HEK293 (cell line): ENCODE measurements at regions of chr14 and their contacts with region 1.

Region 1: GRCh38 chr14:20970983-20971704 is 15.9 kb downstream of the RNASE2 start:
- H3K4me3 ChIP-seq: peak overlapping the region; percentile 70
- H3K27ac ChIP-seq: peak overlapping the region; percentile 45; the same call in 1 of the 2 replicates
- H3K4me1 ChIP-seq: no peaks in the 10 kb centered on the region
- CTCF ChIP-seq: peak; percentile 84

Region 2: DNA sequence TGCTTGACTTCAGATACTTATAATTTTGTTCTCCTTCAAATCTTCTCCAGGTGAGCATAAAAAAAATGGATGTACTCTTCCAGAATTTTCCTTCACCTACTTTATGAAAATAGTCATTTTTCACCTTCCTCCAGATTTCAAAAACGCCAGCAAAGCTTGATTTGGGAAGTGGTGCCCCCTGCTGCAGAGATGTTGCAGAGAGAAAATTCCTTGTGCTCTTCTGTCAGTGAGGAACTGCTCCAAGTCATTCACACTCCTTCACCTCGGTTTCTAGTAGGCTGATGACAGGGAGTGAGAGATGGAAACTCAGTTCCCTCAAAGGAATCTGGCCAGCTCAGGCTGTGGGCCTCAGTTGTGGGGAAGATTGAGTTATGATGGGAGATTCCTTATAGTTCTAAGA is 104.2 kb before region 1 on chr14:
- CTCF ChIA-PET with region 1: interaction called, 21 read pairs
- POLR2A ChIA-PET with region 1: no interaction called
- H3K4me3 ChIP-seq: no peak overlapping the region
- H3K27ac ChIP-seq: no peak overlapping the region
- H3K4me1 ChIP-seq: no peaks in the 10 kb centered on the region
- CTCF ChIP-seq: no peak

Region 3: DNA sequence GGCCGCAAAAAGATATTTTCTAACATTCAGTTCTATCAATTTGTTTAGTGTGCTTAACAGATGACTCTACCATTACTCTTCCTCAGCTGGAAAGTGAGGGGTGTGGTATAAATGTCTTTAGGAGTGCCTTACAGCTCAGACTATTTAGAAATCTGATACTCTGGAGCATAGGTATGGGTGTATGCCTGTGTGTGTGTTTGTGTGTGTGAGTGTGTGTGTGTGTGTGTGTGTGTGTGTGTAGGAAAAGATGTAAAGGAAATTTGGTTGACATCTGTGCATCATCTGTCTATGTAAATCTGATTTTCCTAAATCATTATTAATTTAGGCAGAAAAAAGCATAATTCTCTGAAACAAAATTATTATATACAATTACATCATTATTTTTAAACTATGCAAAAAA is 63.9 kb before region 1 on chr14:
- CTCF ChIA-PET with region 1: no interaction called
- POLR2A ChIA-PET with region 1: no interaction called
- H3K4me3 ChIP-seq: no peak overlapping the region
- H3K27ac ChIP-seq: no peak overlapping the region
- H3K4me1 ChIP-seq: no peaks in the 10 kb centered on the region
- CTCF ChIP-seq: no peak

Region 4: DNA sequence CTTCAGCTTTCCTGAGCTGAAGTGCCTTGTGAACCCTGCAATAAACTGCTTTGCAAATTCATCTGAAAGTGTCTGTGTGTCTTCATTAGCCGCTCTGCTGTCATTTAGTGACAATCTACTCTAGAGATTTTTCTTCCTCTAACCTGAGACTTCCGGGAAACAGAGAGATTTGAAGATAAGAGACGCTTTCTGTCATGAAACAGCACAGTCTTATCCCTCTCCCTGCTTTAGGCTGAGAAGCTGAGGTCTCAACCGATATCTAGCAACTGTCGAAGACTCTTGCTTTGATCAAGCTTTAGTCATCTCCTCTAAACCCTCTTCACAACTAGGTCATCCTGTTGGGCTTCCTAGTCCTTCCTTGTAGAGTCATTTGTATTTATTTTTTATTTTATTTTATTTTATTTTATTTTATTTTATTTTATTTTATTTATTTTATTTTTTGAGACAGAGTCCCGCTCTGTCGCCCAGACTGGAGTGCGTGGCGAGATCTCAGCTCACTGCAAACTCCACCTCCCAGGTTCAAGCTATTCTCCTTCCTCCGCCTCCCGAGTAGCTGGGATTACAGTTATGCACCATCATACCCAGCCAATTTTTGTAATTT is 14.7 kb before region 1 on chr14:
- CTCF ChIA-PET with region 1: interaction called, 46 read pairs
- POLR2A ChIA-PET with region 1: interaction called, 17 read pairs
- H3K4me3 ChIP-seq: no peak overlapping the region
- H3K27ac ChIP-seq: no peak overlapping the region
- H3K4me1 ChIP-seq: no peaks in the 10 kb centered on the region
- CTCF ChIP-seq: no peak

Region 5: GRCh38 chr14:20989572-20990551 is 18.7 kb after region 1 on chr14 and contains the start of gene METTL17:
- CTCF ChIA-PET with region 1: interaction called, 56 read pairs
- POLR2A ChIA-PET with region 1: interaction called, 4 read pairs
- H3K4me3 ChIP-seq: peak within 1 kb of the TSS; percentile 94
- H3K27ac ChIP-seq: peak within 1 kb of the TSS; percentile 76
- H3K4me1 ChIP-seq: 0 out of 2 replicates have a peak, but pooled peaks cover 2% of the 10 kb centered on the region
- CTCF ChIP-seq: peak; percentile 85

Region 6: DNA sequence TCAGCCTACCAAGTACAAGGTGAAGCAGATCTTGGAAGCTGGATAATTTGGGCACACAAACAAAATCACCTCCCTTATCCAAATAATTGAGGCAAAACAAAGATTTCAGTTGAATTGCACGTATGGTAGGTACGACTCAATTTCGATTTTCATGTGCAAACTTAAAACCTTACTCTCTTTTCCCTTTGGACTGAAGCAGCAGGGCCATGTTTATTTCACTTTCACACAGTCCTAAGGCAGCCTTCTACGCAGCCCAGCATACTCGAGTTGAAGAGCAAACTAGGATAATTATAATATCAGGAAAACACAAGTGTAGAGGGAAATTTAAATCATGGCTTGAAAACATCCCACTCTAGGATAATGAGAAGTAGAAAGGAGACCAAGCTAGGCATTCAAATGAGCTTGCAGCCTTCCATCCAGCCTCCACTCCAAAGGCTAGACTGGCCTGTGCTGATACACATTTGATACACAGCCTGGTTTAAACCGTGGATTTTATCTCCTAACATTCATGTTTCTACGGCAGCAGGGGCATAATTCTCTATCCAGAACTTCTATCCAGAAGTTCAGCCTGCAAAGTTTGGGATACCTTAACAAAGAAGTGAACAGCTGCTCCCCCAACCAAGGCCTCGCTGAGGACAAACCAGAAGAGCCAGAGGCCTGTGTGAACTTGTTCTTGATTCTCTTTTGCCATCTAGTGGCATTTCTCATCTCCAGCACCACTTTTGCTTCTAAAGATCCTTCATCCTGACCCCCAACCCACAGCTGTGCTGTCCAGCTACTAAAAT is 68.6 kb after region 1 on chr14:
- CTCF ChIA-PET with region 1: interaction called, 12 read pairs
- POLR2A ChIA-PET with region 1: no interaction called
- H3K4me3 ChIP-seq: no peak overlapping the region
- H3K27ac ChIP-seq: no peak overlapping the region
- H3K4me1 ChIP-seq: no peaks in the 10 kb centered on the region
- CTCF ChIP-seq: peak; percentile 67

Region 7: GRCh38 chr14:21257394-21257909 is 286.3 kb after region 1 on chr14:
- CTCF ChIA-PET with region 1: no interaction called
- POLR2A ChIA-PET with region 1: no interaction called
- H3K4me3 ChIP-seq: no peak overlapping the region
- H3K27ac ChIP-seq: no peak overlapping the region
- H3K4me1 ChIP-seq: peaks cover 8% of the 10 kb centered on the region; the same call in 1 of the 2 replicates
- CTCF ChIP-seq: no peak

Region 8: GRCh38 chr14:21647380-21647779 is 676.2 kb after region 1 on chr14:
- CTCF ChIA-PET with region 1: no interaction called
- POLR2A ChIA-PET with region 1: no interaction called
- H3K4me3 ChIP-seq: no peak overlapping the region
- H3K27ac ChIP-seq: no peak overlapping the region
- H3K4me1 ChIP-seq: no peaks in the 10 kb centered on the region
- CTCF ChIP-seq: no peak